Activated CD4-positive, alpha-beta memory T cell treated with anti-CD3 and anti-CD28 coated beads for 36 hours (primary cell): ENCODE measurements at regions of chr19 and their contacts with region 1.

Region 1: GRCh38 chr19:8389891-8390616 is at the start of gene RAB11B:
- DNase-seq: peak; percentile 100
- H3K4me3 Mint-ChIP-seq: peak within 1 kb of the TSS; percentile 92
- H3K27ac Mint-ChIP-seq: peak within 1 kb of the TSS; percentile 97
- H3K4me1 Mint-ChIP-seq: peaks cover 19% of the 10 kb centered on the region
- H3K27me3 Mint-ChIP-seq: no peaks in the 10 kb centered on the region
- total RNA-seq, gene RAB11B: 74.2 to 74.9 TPM

Region 2: GRCh38 chr19:8321060-8321985 is 68.7 kb before region 1 on chr19 and contains the starts of genes NDUFA7 and RPS28:
- CTCF ChIA-PET with region 1: no interaction called
- POLR2A ChIA-PET with region 1: interaction called, 3 read pairs
- intact Hi-C with region 1: loop called (anchors 1 kb)
- DNase-seq: peak; percentile 99
- H3K4me3 Mint-ChIP-seq: peak within 1 kb of the TSS; percentile 99
- H3K27ac Mint-ChIP-seq: peak within 1 kb of the TSS; percentile 91
- H3K4me1 Mint-ChIP-seq: peaks cover 33% of the 10 kb centered on the region
- H3K27me3 Mint-ChIP-seq: no peaks in the 10 kb centered on the region
- total RNA-seq, gene NDUFA7: 84.2 to 85.1 TPM
- total RNA-seq, gene RPS28: 2,068 to 2,091 TPM

Region 3: DNA sequence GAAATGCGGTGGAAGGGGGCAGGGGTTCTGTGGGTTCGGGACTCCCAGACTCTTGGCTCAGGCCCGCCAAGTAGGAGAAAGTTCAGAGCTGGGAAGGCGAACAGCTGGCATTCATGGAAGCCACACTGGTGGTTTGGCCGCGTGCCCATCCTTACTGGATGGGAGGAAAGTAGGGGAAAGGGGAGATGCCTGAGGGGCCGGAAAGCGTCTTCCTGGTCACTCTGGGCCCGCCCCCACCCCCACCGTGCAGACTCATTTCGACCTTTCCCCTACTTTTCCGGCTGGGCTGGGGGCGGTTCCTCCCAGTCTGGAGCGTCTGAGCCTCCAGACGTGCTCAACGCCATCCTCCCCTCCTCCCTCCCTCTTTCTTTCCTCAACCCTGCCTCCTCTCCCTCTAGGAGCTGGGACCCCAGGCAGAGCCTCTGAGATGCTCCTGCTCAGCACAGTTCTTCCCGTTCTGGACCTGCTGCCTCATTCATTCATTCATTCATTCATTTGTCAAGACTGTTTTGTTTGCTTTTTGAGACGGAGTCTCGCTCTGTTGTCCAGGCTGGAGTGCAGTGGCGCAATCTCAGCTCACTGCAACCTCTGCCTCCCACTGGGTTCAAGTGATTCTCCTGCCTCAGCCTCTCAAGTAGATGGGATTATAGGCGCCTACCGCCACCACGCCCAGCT is 22.6 kb before region 1 on chr19:
- CTCF ChIA-PET with region 1: no interaction called
- POLR2A ChIA-PET with region 1: no interaction called
- intact Hi-C with region 1: no loop called
- DNase-seq: no peak
- H3K4me3 Mint-ChIP-seq: no peak overlapping the region
- H3K27ac Mint-ChIP-seq: no peak overlapping the region
- H3K4me1 Mint-ChIP-seq: peaks cover 16% of the 10 kb centered on the region
- H3K27me3 Mint-ChIP-seq: peaks cover 36% of the 10 kb centered on the region

Region 4: GRCh38 chr19:8412783-8413628 is 23.0 kb after region 1 on chr19 and contains the start of gene MARCHF2:
- CTCF ChIA-PET with region 1: interaction called, 6 read pairs
- POLR2A ChIA-PET with region 1: no interaction called
- intact Hi-C with region 1: loop called (anchors 1 kb)
- DNase-seq: peak; percentile 98
- H3K4me3 Mint-ChIP-seq: peak within 1 kb of the TSS; percentile 67
- H3K27ac Mint-ChIP-seq: no peak within 1 kb of the TSS
- H3K4me1 Mint-ChIP-seq: peaks cover 11% of the 10 kb centered on the region
- H3K27me3 Mint-ChIP-seq: no peaks in the 10 kb centered on the region
- total RNA-seq, gene MARCHF2: 14.5 to 16.0 TPM

Region 5: DNA sequence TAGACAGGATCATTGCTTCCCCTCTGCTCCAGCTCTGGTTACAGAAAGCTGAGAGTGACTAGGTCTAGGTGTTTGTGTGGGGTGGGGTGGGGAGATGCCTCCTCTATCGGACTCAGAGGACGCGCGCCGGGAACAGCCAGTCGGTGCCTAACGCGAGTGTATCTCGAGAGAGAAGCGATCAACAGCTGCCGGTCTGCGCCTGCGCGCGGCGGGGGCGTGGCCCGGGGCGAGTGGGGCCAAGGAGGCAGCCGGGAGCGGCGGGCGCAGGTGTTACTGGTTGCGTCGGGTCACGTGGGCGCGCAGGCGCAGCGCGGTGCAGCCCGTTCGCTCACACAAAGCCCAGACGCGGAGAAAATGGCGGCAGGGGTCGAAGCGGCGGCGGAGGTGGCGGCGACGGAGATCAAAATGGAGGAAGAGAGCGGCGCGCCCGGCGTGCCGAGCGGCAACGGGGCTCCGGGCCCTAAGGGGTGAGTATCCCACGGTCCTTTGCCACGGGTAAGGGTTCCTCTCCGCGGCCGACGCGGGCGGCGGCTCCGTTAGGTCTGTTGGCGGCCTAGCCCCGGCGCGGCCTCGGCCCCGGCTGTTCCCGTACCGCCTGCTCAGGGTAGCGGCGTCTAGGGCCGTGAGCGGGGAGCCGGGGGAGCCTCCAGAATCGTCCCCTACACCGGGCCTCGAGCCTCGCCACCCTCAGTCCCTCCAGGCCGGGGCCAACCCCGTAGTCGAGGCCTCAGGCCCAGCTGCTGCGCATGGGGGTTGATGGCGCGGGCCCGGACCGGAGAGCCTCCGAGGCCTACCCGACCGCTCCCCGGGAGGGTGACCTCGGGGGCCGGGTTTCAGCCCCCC is 54.8 kb after region 1 on chr19 and contains the start of gene HNRNPM:
- CTCF ChIA-PET with region 1: no interaction called
- POLR2A ChIA-PET with region 1: no interaction called
- intact Hi-C with region 1: loop called (anchors 2 kb)
- DNase-seq: peak; percentile 100
- H3K4me3 Mint-ChIP-seq: peak within 1 kb of the TSS; percentile 90
- H3K27ac Mint-ChIP-seq: peak within 1 kb of the TSS; percentile 98
- H3K4me1 Mint-ChIP-seq: peaks cover 36% of the 10 kb centered on the region
- H3K27me3 Mint-ChIP-seq: no peaks in the 10 kb centered on the region
- total RNA-seq, gene HNRNPM: 237 to 238 TPM

Region 6: DNA sequence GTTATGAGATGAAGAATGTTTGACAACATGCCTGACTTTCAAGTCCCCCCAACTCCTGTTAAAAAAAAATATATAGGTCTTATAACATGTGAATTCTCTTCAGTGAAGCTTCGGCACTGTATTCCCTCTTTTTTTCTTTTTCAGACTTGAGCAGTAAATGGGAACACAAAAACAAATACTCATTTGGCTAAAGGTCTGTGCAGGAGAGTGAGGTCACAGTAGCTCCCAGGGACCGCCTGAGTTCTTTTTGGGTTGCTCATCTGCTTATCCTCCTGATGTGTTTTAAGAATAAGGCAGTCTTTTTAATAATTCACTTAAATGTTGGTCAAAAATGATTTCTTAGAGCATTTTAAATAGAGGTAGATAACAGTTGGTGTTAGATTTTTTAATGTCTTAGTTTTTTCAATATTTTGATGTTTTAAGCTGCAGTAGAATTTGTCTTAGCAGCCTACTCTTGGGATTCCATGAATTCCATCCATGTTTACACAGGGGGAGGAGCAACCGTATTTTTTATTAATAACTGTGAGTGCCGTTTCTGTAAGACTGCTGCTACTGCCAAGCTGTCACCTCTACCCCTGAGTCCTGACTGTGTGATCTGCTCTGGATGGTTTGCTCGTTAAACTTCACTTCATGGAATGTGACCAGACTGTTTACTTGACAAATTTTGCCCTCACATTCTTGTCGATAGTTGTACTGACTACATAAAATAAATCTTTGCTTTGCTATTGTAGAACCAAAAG is 69.6 kb after region 1 on chr19:
- CTCF ChIA-PET with region 1: no interaction called
- POLR2A ChIA-PET with region 1: no interaction called
- intact Hi-C with region 1: no loop called
- DNase-seq: no peak
- H3K4me3 Mint-ChIP-seq: no peak overlapping the region
- H3K27ac Mint-ChIP-seq: no peak overlapping the region
- H3K4me1 Mint-ChIP-seq: peaks cover 77% of the 10 kb centered on the region
- H3K27me3 Mint-ChIP-seq: no peaks in the 10 kb centered on the region

Region 7: DNA sequence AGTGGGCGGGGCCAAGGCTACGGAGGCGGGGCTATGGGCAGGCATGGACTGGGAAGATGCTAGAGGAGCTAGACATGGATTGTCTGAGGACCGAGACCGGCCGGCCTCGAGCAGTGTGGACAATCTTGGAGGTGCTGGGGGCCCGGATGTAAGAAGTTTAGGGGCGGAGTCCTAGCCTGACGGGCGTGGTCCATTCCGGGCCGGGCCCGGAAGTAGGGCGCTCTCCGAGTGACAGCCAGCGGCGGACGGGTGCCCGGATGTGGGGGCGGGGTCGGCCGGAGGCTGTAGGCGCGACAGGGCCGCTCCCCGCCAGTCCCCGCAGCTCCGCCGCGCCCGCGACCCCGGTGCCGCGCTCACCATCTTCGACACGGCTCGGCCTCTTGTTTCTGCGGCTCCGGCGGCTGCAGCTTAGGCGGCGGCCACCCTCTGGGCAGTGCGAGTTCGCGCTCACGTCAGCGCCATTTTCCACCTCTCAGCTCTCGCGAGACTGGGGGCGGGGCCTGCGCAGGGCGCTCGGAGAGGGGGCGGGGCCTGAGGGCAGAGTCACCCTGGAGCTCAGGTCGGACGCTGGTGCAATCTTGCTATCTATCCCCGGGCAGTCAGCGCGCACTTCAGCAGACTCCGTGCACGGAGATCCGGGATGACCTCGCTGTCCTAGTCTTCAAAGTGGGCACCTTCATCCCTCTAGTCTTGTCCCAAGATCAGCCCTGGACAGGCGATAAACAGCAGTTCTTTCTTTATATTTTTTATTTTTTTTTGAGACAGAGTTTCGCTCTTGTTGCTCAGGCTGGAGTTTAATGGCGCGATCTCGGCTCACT is 123.8 kb after region 1 on chr19 and contains the start of gene ZNF414:
- CTCF ChIA-PET with region 1: no interaction called
- POLR2A ChIA-PET with region 1: interaction called, 8 read pairs
- intact Hi-C with region 1: loop called (anchors 1 kb)
- DNase-seq: peak; percentile 98
- H3K4me3 Mint-ChIP-seq: peak within 1 kb of the TSS; percentile 92
- H3K27ac Mint-ChIP-seq: peak within 1 kb of the TSS; percentile 99
- H3K4me1 Mint-ChIP-seq: peaks cover 49% of the 10 kb centered on the region
- H3K27me3 Mint-ChIP-seq: no peaks in the 10 kb centered on the region
- total RNA-seq, gene ZNF414: 19.7 to 24.6 TPM

Region 8: DNA sequence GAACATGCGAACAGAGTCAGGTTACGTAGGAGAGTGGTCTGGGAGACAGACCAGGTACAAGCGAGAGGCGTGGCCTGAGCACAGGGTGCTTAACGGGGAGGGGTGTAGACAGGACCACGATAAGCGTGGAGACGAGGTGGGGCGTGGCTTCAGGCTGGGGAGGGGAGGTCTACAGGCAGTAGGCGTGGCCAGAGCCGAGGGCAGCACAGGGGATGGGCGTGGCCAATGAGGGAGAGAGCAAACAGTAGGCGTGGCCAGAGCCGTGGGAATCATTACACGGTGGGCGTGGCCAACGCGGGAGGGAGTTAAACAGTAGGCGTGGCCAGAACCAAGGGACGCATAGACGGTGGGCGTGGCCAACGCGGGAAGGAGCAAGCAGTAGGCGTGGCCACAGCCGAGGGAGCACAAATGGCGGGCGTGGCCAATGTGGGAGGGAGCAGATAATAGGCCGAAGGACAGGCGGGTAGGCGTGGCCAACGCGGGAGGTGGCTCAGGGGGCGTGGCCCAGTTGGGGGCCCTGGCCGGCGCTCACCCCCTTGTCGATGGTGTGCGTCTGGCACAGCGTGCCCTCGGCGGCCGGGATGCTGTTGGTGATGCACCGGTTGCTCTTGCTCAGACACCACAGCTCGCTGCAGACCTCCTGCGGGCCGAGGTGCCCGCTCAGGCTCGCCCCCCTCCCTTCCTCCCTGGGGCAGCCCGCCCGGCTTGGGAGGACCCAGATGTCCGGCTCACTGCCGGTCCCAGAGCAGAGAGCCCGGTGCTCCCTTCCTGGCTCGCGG is 202.4 kb after region 1 on chr19:
- CTCF ChIA-PET with region 1: no interaction called
- POLR2A ChIA-PET with region 1: no interaction called
- intact Hi-C with region 1: loop called (anchors 1 kb)
- DNase-seq: peak; percentile 99
- H3K4me3 Mint-ChIP-seq: peak overlapping the region; percentile 70
- H3K27ac Mint-ChIP-seq: peak overlapping the region; percentile 59
- H3K4me1 Mint-ChIP-seq: peaks cover 7% of the 10 kb centered on the region
- H3K27me3 Mint-ChIP-seq: no peaks in the 10 kb centered on the region

Region 9: DNA sequence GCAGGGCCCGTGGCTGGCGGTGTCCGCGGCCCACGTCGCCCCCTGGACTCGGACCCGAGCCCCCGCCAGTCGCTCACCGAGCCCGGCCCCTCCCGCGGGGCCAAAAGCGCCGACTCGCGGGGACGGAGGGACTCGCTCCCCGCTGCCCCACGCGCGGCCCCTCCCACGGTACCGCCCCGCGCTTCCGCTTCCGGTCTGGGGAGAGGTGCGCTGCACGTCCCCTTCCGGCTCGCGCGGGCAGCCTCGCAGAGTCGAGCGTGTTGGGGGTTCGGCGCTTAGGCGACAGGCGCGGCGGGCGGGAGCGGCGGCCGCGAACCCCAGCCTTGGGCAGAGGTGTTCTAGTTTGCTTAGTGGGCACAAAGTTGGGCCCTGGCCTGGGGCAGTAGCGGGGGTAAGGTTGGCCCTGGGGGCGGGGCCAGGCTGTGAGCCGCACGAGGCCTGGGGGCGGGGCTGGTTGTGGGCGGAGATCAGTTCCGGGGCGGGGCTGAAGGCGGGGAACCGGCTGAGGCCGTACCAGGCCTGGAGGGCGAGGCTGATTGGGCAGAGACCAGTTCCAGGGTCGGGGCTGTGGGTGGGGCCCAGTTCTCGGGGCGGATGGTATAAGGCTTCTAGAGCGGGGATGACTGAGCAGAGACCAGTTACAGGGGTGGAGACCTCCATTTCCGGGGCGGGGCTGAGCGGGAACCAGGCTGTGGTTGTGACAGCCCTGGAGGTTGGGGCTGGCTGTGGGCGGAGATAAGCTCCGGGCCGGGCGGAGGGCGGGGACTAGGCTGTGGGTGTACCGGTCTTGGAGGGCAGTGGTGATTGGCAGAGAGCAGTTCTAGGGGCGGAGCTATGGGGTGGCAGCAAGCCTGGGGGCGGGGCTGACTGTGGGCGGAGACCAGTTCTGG is 442.3 kb after region 1 on chr19 and contains the starts of genes MBD3L1 and ZNF558:
- CTCF ChIA-PET with region 1: no interaction called
- POLR2A ChIA-PET with region 1: no interaction called
- intact Hi-C with region 1: loop called (anchors 1 kb)
- DNase-seq: peak; percentile 99
- H3K4me3 Mint-ChIP-seq: peak within 1 kb of the TSS; percentile 81
- H3K27ac Mint-ChIP-seq: peak within 1 kb of the TSS; percentile 94
- H3K4me1 Mint-ChIP-seq: peaks cover 22% of the 10 kb centered on the region
- H3K27me3 Mint-ChIP-seq: no peaks in the 10 kb centered on the region
- total RNA-seq, gene MBD3L1: not detected
- total RNA-seq, gene ZNF558: 27.3 to 30.3 TPM